GM12878 (cell line): ENCODE measurements at regions of chr4 and their contacts with region 1.

Region 1: GRCh38 chr4:182938205-182938645 is 21.0 kb upstream of the DCTD start:
- DNase-seq: no peak
- ATAC-seq: peak; percentile 99
- H3K4me3 ChIP-seq: no peak overlapping the region
- H3K27ac ChIP-seq: no peak overlapping the region
- H3K4me1 ChIP-seq: 0 out of 2 replicates have a peak, but pooled peaks cover 3% of the 10 kb centered on the region
- H3K27me3 ChIP-seq: no peaks in the 10 kb centered on the region
- CTCF ChIP-seq: peak; percentile 94 to 97 (median 97)
- EP300 ChIP-seq: no peak
- POLR2A ChIP-seq: no peak
- RAD21 ChIP-seq: peak; percentile 94

Region 2: DNA sequence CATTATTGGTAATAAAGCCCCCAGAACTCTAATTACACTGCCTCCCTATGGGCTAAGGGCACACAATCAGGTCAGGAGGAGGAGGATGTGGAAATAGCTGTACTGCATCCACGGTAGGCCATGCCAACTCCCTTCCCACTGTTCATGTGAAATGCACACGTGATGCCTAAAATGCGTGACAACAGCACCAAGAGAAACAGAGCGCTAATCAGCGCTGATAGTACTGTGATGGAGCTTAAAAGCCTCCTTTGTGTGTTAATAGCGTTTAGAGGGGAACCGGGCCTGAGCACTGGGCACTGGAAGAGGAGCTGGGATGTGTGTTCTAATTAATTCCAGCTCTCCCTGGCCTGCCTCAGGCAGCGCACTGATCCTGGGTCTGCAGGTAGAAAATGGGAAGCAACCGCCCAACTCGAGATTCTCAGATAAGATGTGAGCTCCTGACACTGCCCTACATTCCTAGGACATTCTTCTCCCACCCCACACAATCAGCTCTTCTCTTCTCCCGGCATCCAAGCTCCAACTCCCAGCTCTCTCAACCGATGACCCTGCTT is 33.9 kb before region 1 on chr4:
- CTCF ChIA-PET with region 1: no interaction called
- POLR2A ChIA-PET with region 1: no interaction called
- RAD21 ChIA-PET with region 1: no interaction called
- SMC1A ChIA-PET with region 1: no interaction called
- in situ Hi-C with region 1: no loop called
- intact Hi-C with region 1: no loop called
- DNase-seq: no peak
- ATAC-seq: no peak
- H3K4me3 ChIP-seq: no peak overlapping the region
- H3K27ac ChIP-seq: no peak overlapping the region
- H3K4me1 ChIP-seq: no peaks in the 10 kb centered on the region
- H3K27me3 ChIP-seq: no peaks in the 10 kb centered on the region
- CTCF ChIP-seq: no peak
- EP300 ChIP-seq: no peak
- POLR2A ChIP-seq: no peak
- RAD21 ChIP-seq: no peak

Region 3: GRCh38 chr4:182955411-182955810 is 17.2 kb after region 1 on chr4:
- CTCF ChIA-PET with region 1: interaction called, 14 read pairs
- POLR2A ChIA-PET with region 1: no interaction called
- RAD21 ChIA-PET with region 1: interaction called, 4 read pairs
- SMC1A ChIA-PET with region 1: interaction called, 6 read pairs
- in situ Hi-C with region 1: no loop called
- intact Hi-C with region 1: no loop called
- DNase-seq: no peak
- ATAC-seq: no peak
- H3K4me3 ChIP-seq: no peak overlapping the region
- H3K27ac ChIP-seq: no peak overlapping the region
- H3K4me1 ChIP-seq: no peaks in the 10 kb centered on the region
- H3K27me3 ChIP-seq: no peaks in the 10 kb centered on the region; a peak in 1 of 4 replicates
- CTCF ChIP-seq: no peak
- EP300 ChIP-seq: no peak
- POLR2A ChIP-seq: no peak
- RAD21 ChIP-seq: no peak

Region 4: GRCh38 chr4:183074296-183074990 is 136.2 kb after region 1 on chr4:
- CTCF ChIA-PET with region 1: interaction called, 50 read pairs
- POLR2A ChIA-PET with region 1: no interaction called
- RAD21 ChIA-PET with region 1: interaction called, 16 read pairs
- SMC1A ChIA-PET with region 1: interaction called, 9 read pairs
- in situ Hi-C with region 1: loop called (anchors 5 kb)
- intact Hi-C with region 1: loop called (anchors 1 kb)
- DNase-seq: no peak
- ATAC-seq: no peak
- H3K4me3 ChIP-seq: no peak overlapping the region
- H3K27ac ChIP-seq: no peak overlapping the region
- H3K4me1 ChIP-seq: no peaks in the 10 kb centered on the region
- H3K27me3 ChIP-seq: no peaks in the 10 kb centered on the region
- CTCF ChIP-seq: no peak
- EP300 ChIP-seq: no peak
- POLR2A ChIP-seq: no peak
- RAD21 ChIP-seq: no peak

Region 5: GRCh38 chr4:183256756-183257385 is 318.6 kb after region 1 on chr4:
- CTCF ChIA-PET with region 1: interaction called, 159 read pairs
- POLR2A ChIA-PET with region 1: interaction called, 3 read pairs
- RAD21 ChIA-PET with region 1: interaction called, 35 read pairs
- SMC1A ChIA-PET with region 1: interaction called, 66 read pairs
- in situ Hi-C with region 1: loop called (anchors 5 kb)
- intact Hi-C with region 1: loop called (anchors 1 kb)
- DNase-seq: no peak
- ATAC-seq: peak; percentile 96
- H3K4me3 ChIP-seq: no peak overlapping the region
- H3K27ac ChIP-seq: no peak overlapping the region
- H3K4me1 ChIP-seq: no peaks in the 10 kb centered on the region
- H3K27me3 ChIP-seq: no peaks in the 10 kb centered on the region; a peak in 1 of 4 replicates
- CTCF ChIP-seq: peak; percentile 69 to 85 (median 72)
- EP300 ChIP-seq: no peak
- POLR2A ChIP-seq: no peak
- RAD21 ChIP-seq: peak; percentile 68

Region 6: GRCh38 chr4:183407128-183407585 is 468.9 kb after region 1 on chr4:
- CTCF ChIA-PET with region 1: interaction called, 5 read pairs
- POLR2A ChIA-PET with region 1: no interaction called
- RAD21 ChIA-PET with region 1: interaction called, 3 read pairs
- SMC1A ChIA-PET with region 1: interaction called, 6 read pairs
- in situ Hi-C with region 1: no loop called
- intact Hi-C with region 1: loop called (anchors 10 kb)
- DNase-seq: peak; percentile 19
- ATAC-seq: peak; percentile 98
- H3K4me3 ChIP-seq: peak overlapping the region; percentile 64
- H3K27ac ChIP-seq: no peak overlapping the region
- H3K4me1 ChIP-seq: no peaks in the 10 kb centered on the region
- H3K27me3 ChIP-seq: no peaks in the 10 kb centered on the region; a peak in 1 of 4 replicates
- CTCF ChIP-seq: peak; percentile 88 to 94 (median 89)
- EP300 ChIP-seq: no peak
- POLR2A ChIP-seq: no peak
- RAD21 ChIP-seq: peak; percentile 72